ENCODE measurements at regions of chr12 and their contacts with region 1.

Region 1: GRCh38 chr12:38316391-38317129 is at the start of gene ALG10B:
- DNase-seq: peak; percentile 95
- ATAC-seq: peak; percentile 99
- total RNA-seq, gene ALG10B: 11.3 TPM

Region 2: DNA sequence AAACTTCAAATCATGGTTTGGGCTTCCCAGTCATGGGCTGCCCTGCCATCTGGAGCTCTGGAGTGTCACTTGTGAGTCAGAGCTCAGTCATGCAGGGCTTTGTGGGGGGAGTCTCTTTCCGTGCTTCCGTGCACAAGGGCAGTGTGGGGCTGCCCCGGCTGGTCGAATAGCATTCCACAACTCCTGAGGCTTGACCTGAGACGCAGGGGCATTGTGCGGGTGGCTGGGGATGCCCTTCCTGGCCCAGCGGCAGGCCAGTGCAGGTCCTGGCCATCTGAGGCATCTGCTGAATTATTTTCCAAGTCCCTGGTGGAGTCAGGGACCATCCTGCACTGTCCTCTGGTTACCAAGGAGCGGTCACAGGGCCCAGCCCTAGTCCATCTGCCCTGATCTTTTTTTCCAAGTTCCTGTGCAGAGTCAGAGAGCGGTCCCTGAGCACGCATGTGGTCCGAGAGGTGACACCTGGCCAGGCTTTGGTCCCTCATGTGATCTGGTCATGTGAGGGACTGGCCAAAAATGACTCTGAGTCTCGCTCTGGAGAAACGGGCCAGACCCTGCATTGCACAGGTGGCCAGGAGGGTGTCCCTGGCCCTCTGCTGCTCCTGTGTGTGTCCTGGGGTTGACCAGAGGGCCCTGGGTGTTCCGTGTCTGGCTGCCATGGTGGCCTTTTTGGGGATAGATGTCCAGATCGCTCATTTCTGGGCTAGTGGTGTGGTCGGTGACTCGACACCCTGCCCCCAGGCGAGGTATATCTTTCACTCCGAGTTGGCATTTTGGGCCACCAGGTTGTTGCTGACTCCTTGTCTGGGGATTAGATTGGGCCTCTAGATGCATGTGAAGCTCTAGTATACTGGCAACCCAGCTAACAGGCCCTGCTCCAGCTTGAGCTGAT is 166.9 kb before region 1 on chr12:
- intact Hi-C with region 1: loop called (anchors 10 kb)
- DNase-seq: no peak
- ATAC-seq: no peak

Measured in sciatic nerve (tissue), 2 donors.